GM12878 (cell line): ENCODE measurements at regions of chr15 and their contacts with region 1.

Region 1: DNA sequence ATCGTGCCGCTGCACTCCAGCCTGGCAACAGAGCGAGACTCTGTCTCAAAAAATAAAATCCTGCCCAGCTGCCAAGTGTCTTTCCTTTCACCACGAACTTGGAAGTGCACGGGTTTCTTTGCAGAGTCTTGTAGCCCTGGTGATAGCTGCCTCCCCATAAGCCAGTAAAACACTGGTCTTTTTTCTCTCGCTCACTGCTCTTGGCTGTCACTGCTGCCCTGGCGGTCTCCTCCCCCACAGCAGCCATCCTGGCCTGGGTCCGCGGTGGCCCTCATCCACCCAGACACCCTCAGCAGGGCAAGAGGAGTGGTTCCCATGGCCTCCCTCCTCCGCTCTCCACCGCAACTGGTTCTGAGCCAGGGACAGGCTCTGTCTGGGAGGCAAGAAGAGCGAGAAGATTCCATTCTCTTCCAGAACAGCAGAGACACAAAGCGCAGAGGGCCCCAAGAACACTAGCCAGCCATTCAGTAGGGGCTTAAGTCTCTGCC is 44.4 kb downstream of the KLHL25 start:
- DNase-seq: no peak
- ATAC-seq: peak; percentile 9
- H3K4me3 ChIP-seq: no peak overlapping the region
- H3K27ac ChIP-seq: no peak overlapping the region
- H3K4me1 ChIP-seq: no peaks in the 10 kb centered on the region
- H3K27me3 ChIP-seq: no peaks in the 10 kb centered on the region
- CTCF ChIP-seq: no peak
- EP300 ChIP-seq: no peak
- POLR2A ChIP-seq: peak; percentile 55
- RAD21 ChIP-seq: no peak

Region 2: DNA sequence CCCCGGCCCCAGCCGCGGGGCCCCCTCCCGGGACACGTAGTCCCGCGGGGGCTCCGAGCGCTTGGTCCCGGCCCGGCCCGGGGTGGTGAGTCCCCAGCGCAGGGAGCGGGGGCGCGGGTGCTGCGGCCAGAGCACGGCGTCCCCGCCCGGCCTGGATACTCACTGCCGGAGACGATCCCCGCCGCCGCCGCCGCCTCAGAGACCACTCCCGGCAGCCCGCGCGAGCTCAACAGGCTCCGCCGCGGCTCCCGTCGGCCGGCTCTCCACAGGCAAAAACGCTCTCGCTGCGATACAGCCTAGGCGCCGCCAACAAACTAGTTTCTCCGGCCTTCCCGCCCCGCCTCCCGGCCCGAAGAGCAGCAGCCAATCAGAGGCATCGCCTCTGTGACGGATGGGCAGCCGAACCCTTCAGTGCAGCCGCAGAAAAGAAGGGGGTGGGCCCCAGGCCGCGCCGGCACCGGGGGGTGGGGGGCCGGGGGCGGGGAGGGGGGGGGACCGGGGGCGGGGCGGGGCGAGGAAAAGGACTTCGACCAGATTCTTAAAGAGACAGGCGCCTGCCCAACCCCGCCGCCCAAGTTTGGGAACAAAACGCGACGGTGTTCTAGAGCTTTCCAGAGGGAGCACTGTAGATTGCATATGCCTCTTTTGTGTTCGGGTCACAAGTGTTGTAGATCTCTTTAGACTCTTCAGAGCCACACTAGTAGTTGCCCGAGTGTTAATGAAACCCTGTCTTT is 44.4 kb after region 1 on chr15 and contains the start of gene KLHL25:
- CTCF ChIA-PET with region 1: no interaction called
- POLR2A ChIA-PET with region 1: no interaction called
- RAD21 ChIA-PET with region 1: no interaction called
- SMC1A ChIA-PET with region 1: no interaction called
- in situ Hi-C with region 1: no loop called
- intact Hi-C with region 1: loop called (anchors 5 kb)
- DNase-seq: peak; percentile 56
- ATAC-seq: peak; percentile 99
- H3K4me3 ChIP-seq: peak within 1 kb of the TSS; percentile 77
- H3K27ac ChIP-seq: no peak within 1 kb of the TSS; the same call in 1 of the 2 replicates
- H3K4me1 ChIP-seq: peaks cover 14% of the 10 kb centered on the region
- H3K27me3 ChIP-seq: no peaks in the 10 kb centered on the region
- CTCF ChIP-seq: no peak
- EP300 ChIP-seq: no peak
- POLR2A ChIP-seq: peak; percentile 78
- RAD21 ChIP-seq: no peak
- polyA plus RNA-seq, gene KLHL25: 0.04 TPM in 1 of 2 experiments, not detected in the other